IMR-90 (cell line): ENCODE measurements at regions of chr16 and their contacts with region 1.

Region 1: GRCh38 chr16:66483689-66484481 is 56.8 kb downstream of the BEAN1 start:
- DNase-seq: peak; percentile 63
- ATAC-seq: peak; percentile 89
- H3K4me3 ChIP-seq: no peak overlapping the region
- H3K27ac ChIP-seq: no peak overlapping the region
- H3K4me1 ChIP-seq: peaks cover 11% of the 10 kb centered on the region; the same call in 1 of the 2 replicates
- H3K27me3 ChIP-seq: no peaks in the 10 kb centered on the region
- CTCF ChIP-seq: peak; percentile 97
- POLR2A ChIP-seq: 0 out of 2 replicates have a peak, but pooled peaks have one; percentile 30
- RAD21 ChIP-seq: peak; percentile 95

Region 2: GRCh38 chr16:66275775-66276428 is 208.0 kb before region 1 on chr16:
- CTCF ChIA-PET with region 1: no interaction called
- POLR2A ChIA-PET with region 1: no interaction called
- dilution Hi-C with region 1: no loop called
- in situ Hi-C with region 1: no loop called
- intact Hi-C with region 1: loop called (anchors 5 kb)
- DNase-seq: peak; percentile 76
- ATAC-seq: peak; percentile 80
- H3K4me3 ChIP-seq: no peak overlapping the region
- H3K27ac ChIP-seq: no peak overlapping the region
- H3K4me1 ChIP-seq: no peaks in the 10 kb centered on the region; the same call in 1 of the 2 replicates
- H3K27me3 ChIP-seq: no peaks in the 10 kb centered on the region; the same call in 1 of the 2 replicates
- CTCF ChIP-seq: peak; percentile 69
- POLR2A ChIP-seq: no peak
- RAD21 ChIP-seq: peak; percentile 61

Region 3: DNA sequence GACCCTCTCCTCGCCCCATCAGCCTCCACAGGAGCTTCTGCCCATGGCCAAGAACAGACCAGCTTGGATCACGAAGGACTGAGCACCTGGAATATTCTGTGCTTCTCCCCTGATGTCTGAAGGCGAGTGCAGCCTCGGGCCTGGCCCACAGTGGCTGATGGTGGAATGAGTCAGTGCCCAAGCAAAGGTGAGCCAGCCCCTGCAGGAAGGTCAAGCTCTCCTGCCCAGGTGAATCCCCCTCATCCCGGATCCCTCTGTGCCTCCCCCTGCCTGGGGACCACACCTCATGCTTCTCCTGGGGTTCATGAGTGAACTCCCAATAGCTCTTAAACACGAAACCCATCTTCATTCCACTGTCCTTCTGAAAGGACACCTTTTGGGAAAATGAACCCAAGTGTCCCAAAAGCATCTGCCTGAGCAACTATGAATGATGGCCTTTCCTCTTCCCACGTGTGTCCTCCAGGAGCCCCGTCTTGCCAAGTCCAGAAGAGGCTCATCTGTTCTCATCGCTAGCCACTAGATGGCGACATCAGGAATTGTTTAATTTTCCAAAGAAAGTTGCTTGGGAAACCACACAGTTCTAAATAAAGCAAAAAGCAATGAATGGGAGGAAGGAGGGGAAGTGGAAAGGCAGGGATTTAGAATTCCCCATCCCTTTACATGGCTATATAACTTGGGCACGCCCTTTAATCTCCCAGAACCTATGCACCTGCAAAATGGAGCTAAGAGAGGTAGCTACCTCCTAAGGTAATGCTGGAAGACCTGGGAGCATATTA is 126.5 kb before region 1 on chr16:
- CTCF ChIA-PET with region 1: no interaction called
- POLR2A ChIA-PET with region 1: no interaction called
- dilution Hi-C with region 1: no loop called
- in situ Hi-C with region 1: no loop called
- intact Hi-C with region 1: loop called (anchors 1 kb)
- DNase-seq: peak; percentile 83
- ATAC-seq: peak; percentile 82
- H3K4me3 ChIP-seq: no peak overlapping the region
- H3K27ac ChIP-seq: no peak overlapping the region
- H3K4me1 ChIP-seq: peaks cover 2% of the 10 kb centered on the region; the same call in 1 of the 2 replicates
- H3K27me3 ChIP-seq: peaks cover 50% of the 10 kb centered on the region
- CTCF ChIP-seq: peak; percentile 75
- POLR2A ChIP-seq: no peak
- RAD21 ChIP-seq: peak; percentile 50; the same call in 1 of the 2 replicates

Region 4: GRCh38 chr16:66588981-66589713 is 105.3 kb after region 1 on chr16:
- CTCF ChIA-PET with region 1: interaction called, 3 read pairs
- POLR2A ChIA-PET with region 1: no interaction called
- dilution Hi-C with region 1: no loop called
- in situ Hi-C with region 1: no loop called
- intact Hi-C with region 1: loop called (anchors 5 kb)
- DNase-seq: peak; percentile 18
- ATAC-seq: peak; percentile 63; the same call in 1 of the 2 replicates
- H3K4me3 ChIP-seq: no peak overlapping the region
- H3K27ac ChIP-seq: no peak overlapping the region
- H3K4me1 ChIP-seq: no peaks in the 10 kb centered on the region
- H3K27me3 ChIP-seq: peaks cover 24% of the 10 kb centered on the region
- CTCF ChIP-seq: peak; percentile 51
- POLR2A ChIP-seq: no peak
- RAD21 ChIP-seq: peak; percentile 57